ACHN (cell line): ENCODE measurements at regions of chrX and their contacts with region 1.

Region 1: GRCh38 chrX:152821145-152821765 is 9.3 kb downstream of the CETN2 start:
- DNase-seq: peak; percentile 34

Region 2: DNA sequence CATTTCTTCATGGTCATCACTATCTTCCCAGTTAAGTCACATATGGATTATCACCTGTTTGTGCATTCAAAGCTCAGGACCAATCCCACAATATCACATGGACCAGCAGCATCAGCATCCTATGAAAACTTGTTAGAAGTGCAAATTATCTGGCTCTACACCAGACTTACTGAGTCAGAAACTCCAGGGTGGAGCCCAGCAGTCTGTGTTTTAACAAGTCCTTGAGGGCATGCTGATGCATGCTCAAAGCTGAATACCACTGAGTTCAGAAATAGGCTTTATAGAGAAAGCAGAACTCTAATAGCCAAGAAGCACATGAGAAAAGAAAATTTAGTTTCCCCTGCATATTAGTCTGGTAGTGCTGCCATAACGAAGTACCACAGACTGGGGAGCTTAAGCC is 245.9 kb before region 1 on chrX:
- in situ Hi-C with region 1: no loop called
- DNase-seq: no peak

Region 3: GRCh38 chrX:152614791-152615190 is 206.5 kb before region 1 on chrX:
- in situ Hi-C with region 1: no loop called
- DNase-seq: no peak

Region 4: DNA sequence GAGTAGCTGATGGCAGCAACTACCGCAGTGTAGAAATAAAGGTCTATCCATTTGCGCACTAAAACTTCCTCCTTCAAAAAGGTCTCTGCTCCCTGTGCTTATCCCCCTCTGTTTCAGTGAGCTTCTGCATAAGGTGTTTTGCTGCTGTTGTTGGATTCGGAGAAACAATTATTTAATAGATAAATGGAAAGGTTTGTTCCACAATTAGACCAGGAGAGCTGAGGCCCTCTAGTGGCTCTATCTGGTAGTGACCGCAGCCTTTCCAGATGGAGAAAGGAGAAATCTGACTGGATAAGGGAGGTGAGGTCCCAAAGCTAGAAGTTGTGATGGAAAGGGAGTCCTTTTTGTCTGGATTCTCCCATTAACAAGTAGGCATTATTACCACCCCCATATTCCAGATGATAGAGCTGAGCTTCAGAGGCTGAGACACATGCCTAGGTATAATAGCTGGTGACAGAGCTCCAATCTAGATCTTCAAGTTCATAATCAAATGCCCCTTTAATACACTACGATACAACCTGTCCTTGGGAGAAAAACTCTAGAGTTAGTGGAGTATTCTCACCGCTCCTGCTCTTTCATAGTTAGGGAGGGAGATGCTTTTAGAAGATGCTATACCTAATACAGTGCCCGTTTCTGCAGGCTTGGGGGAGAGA is 188.7 kb before region 1 on chrX:
- in situ Hi-C with region 1: loop called (anchors 25 kb)
- DNase-seq: peak; percentile 24

Region 5: DNA sequence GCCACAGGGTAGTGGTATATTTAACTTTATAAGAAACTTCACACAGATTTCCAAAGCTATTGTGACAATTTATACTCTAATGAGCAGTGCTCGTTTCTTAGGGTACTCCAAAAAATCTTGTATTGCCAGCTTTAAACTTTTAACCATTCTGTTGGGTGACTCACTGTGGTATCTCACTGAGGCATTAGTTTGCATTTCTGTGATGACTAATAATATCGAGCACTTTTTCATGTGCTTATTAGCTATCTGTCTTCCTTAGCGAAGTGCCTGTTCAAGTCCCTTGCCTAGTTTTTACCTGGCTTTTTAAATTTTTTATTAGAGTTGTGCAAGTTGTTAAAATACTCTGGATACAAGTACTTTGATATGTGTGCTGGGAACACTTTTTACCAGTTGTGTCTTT is 240.5 kb after region 1 on chrX:
- in situ Hi-C with region 1: no loop called
- DNase-seq: peak; percentile 12